AG04449 (cell line): ENCODE measurements at regions of chr22 and their contacts with region 1.

Region 1: DNA sequence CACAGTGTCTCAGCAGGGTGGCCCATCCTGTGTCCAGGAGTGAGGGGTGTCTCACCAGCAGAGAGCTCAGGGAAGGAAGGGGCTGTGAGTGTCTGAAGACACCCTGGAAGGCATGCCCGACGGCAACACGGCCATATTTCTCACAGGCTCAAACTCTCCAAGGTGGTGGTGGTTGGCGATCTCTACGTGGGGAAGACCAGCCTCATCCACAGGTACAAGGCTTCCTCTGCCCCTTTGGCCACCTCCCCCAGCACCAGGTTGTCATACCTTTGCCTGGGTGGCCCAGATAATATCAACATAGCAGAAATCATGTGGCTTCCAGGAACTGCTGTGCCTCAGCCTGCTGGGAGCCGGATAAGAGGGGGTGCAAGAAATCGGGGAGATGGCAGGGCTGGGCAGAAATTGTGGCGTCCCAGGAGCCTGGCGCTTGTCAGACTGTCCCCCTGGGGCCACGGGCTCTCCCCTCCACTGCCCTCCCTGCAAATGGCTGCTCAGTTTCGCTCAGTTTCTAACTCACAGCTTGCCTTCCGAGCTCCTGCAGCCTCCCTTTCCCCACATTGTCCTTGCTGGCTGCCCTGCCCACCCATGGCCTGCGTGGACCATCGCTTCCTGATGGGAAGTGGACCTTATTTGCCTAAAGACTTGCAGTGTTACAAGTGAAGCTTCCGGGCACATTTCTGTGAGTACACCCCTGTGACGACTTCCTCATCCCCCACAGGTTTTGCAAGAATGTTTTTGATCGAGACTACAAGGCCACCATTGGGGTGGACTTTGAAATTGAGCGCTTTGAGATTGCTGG is 7.2 kb downstream of the RAB36 start:
- DNase-seq: no peak
- H3K4me3 ChIP-seq: no peak overlapping the region
- CTCF ChIP-seq: no peak

Region 2: GRCh38 chr22:23163665-23164064 is 11.2 kb after region 1 on chr22:
- CTCF ChIA-PET with region 1: interaction called, 10 read pairs
- POLR2A ChIA-PET with region 1: no interaction called
- DNase-seq: no peak
- H3K4me3 ChIP-seq: no peak overlapping the region
- CTCF ChIP-seq: no peak